Activated CD4-positive, alpha-beta memory T cell treated with anti-CD3 and anti-CD28 coated beads, Interleukin-2, amount 10 ng/mL, durations not matched to agents 7 days and 5 days (primary cell): ENCODE measurements at regions of chr6 and their contacts with region 1.

Region 1: DNA sequence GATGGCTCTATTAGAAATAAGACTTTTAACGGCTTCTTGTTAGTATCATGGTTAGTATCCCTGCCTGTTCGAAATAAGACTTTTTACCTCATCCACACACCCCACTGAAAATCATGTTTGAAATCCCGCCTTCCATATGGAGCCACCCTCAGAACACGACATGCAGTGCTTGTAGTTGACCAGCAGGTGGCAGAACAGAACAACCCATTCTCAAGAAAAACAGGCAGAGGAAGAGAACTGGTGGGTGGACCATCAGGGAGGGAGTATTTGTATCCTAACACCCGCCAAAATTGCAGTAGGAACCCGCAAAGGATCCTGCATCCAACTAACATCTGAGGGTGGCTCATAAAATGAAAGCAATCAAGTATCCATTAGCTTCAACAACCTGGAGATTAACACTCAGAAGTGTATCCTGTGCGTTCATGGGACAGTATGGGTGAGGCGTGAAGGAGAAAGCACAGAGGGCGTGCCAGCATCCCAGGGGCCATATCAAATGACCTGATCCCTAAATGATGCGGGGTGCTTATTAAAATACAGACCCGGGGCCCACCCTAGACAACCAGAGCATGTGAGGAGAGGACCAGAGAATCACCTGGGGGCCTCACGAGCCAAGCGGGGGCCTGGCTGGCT is 89.6 kb upstream of the NHSL1 start:
- DNase-seq: peak; percentile 56
- H3K4me3 Mint-ChIP-seq: no peak overlapping the region
- H3K27ac Mint-ChIP-seq: no peak overlapping the region
- H3K4me1 Mint-ChIP-seq: peaks cover 46% of the 10 kb centered on the region
- H3K27me3 Mint-ChIP-seq: no peaks in the 10 kb centered on the region

Region 2: DNA sequence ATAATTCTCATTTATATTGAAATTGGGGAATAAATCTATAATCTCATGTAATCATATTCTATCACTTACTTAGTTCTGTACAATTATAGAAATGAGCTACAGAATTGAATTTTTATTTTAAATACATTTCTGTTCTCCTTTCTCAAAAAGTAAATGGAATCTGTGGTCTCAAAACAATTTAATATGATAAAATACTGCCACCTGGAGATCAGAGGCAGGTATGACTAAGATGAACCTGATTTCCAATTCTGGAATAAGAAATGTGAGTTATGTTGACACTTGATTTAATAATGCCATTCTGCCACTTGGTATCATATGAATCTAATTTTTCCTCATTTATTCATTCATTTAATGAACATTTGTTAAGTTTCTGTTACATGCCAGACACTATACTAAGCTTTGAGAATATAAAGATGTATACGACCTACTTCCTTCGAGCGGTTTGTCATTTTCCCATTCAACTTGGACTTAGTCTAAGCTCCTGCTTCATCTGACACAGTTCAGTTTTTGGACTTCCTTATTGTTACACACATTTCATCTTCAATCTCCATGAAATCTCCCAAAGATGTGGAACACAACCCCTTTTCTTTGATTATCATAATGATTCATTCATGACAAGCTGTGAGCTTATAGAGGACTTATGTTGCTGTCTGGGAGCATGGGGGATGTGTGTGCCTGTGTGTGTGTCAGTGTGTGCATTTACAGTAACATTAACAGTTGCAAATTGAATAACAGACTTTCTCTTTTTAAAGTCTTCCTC is 177.2 kb after region 1 on chr6:
- CTCF ChIA-PET with region 1: interaction called, 71 read pairs
- POLR2A ChIA-PET with region 1: no interaction called
- DNase-seq: no peak
- H3K4me3 Mint-ChIP-seq: no peak overlapping the region
- H3K27ac Mint-ChIP-seq: no peak overlapping the region
- H3K4me1 Mint-ChIP-seq: peaks cover 5% of the 10 kb centered on the region
- H3K27me3 Mint-ChIP-seq: no peaks in the 10 kb centered on the region

Region 3: DNA sequence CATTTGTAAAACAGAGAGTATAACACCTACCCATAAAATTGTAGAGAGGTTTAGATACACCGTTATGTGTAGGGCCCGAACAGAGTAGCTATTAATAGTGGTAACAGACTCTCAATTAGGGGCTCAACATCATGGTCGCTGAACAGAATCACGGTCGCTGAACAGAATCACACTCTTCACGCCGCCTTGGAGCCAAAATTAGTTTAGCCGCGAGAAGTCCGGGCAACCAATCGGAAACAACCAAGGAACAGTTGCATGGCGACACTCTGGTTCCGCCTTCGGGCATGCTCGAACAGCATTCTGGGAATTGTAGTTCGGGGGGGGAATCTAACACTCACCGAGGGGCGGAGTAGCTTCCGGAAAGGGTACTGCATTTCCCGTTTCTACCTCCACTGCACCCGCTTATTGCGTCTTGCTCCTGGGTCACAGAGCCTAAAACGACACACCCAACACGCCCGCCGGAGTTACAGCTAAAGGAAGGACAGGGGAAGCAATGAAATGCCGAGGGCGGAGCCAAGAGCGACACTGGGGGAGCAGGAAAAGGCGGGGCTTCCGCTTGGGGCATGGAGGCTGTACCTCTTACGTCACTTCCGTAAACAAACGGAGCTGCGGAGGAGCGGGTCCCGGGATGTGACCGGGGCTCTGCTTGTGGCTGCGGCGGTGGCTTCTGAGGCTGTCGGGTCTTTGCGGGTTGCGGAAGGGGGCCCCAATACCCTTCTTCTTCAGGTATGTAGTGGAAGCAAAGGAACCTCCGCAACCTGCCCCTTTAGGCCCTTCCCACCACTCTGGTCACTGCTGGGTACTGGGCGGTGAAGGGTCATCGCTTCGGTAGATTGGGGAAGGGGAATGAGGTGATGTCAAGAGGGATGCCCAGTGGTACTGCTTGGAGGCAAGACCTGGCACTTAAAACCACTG is 184.5 kb after region 1 on chr6 and contains the start of gene CCDC28A:
- CTCF ChIA-PET with region 1: interaction called, 71 read pairs
- POLR2A ChIA-PET with region 1: no interaction called
- DNase-seq: peak; percentile 93
- H3K4me3 Mint-ChIP-seq: peak within 1 kb of the TSS; percentile 100
- H3K27ac Mint-ChIP-seq: peak within 1 kb of the TSS; percentile 100
- H3K4me1 Mint-ChIP-seq: peaks cover 36% of the 10 kb centered on the region
- H3K27me3 Mint-ChIP-seq: no peaks in the 10 kb centered on the region
- total RNA-seq, gene CCDC28A: 28.0 to 28.7 TPM